ENCODE measurements at regions of chr20 and their contacts with region 1.

Region 1: DNA sequence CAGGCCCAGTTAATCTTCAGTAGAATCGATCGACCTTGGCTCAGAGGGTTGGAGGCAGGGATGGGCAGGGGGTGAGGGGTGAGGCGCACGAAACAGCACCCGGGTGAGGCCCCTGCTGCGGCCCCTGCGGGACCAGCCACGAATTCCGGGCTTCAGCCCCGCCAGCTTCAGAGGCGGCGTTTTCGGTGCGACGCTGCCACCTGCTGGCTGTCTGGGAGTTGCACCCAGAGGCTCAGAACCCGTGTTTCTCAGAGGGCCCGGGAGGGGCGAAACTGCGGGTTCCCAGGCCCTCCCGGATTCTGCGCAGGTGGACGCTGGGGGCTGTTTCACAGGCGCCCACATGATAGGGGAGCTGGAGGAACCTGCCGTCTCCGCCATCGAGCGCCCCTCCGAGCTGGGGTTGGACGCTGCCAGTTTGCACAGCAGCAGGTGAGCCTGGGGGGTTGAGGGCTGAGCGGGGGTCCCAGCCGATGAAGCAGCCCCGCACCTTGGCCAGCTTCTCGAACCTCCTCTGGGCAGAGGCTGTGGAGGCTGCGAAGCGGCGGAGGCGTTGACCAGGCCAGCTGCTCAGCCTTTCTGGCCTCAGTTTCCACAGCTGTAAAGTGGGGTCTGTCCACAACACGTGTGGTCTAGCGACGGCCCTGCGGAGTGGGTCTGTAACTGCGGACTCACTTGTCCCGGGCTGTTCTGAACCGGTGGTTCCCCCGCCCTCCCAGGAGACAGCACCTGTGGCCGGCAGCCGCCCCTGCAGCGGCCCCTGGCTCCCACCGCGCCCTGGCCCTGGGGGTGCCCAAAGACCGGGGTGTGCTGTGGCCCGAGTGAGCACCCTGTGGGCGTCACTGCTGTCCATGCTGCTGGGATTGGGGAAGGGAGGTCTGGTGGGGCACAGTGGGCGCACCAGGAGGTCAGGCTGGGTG is 2.5 kb upstream of the BHLHE23 start:
- DNase-seq: peak; percentile 90
- ATAC-seq: peak; percentile 82
- H3K4me3 Mint-ChIP-seq: no peak overlapping the region
- H3K27ac Mint-ChIP-seq: no peak overlapping the region
- H3K4me1 Mint-ChIP-seq: peaks cover 21% of the 10 kb centered on the region
- H3K27me3 Mint-ChIP-seq: peaks cover 42% of the 10 kb centered on the region

Region 2: GRCh38 chr20:62822788-62823651 is 186.3 kb before region 1 on chr20:
- CTCF ChIA-PET with region 1: no interaction called
- POLR2A ChIA-PET with region 1: no interaction called
- intact Hi-C with region 1: loop called (anchors 2 to 5 kb)
- DNase-seq: peak; percentile 82
- ATAC-seq: peak; percentile 85
- H3K4me3 Mint-ChIP-seq: no peak overlapping the region
- H3K27ac Mint-ChIP-seq: no peak overlapping the region
- H3K4me1 Mint-ChIP-seq: no peaks in the 10 kb centered on the region
- H3K27me3 Mint-ChIP-seq: peaks cover 3% of the 10 kb centered on the region

Region 3: DNA sequence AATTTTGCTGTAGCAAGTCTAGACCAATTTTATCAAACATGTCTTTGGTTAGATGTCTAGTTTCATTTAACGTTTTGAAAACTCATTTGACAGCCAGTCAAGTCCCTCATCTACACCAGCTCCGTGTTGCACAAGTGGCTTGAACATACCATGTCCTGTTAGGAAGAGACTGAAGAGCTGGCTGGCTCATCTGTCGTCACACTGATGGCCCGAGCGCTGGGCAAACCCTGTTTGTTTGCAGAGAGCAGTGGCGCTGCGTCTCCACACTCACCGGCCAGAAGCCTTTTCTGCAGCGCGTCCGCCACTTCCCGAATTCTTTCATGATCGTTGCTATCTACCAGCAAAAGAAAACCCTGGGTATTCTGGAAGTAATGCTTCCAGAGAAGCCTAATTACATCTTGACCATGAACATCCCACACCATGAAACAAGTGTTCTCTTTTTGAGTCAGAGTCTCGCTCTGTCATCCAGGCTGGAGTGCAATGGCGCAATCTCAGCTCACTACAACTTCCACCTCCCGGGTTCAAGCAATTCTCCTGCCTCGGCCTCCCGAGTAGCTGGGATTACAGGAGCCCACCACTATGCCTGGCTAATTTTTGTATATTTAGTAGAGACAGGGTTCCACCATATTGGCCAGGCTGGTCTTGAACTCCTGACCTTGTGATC is 137.0 kb before region 1 on chr20:
- CTCF ChIA-PET with region 1: interaction called, 4 read pairs
- POLR2A ChIA-PET with region 1: no interaction called
- intact Hi-C with region 1: loop called in 1 of 2 experiments (anchors 2 kb)
- DNase-seq: no peak
- ATAC-seq: no peak
- H3K4me3 Mint-ChIP-seq: no peak overlapping the region
- H3K27ac Mint-ChIP-seq: no peak overlapping the region
- H3K4me1 Mint-ChIP-seq: peaks cover 21% of the 10 kb centered on the region
- H3K27me3 Mint-ChIP-seq: peaks cover 2% of the 10 kb centered on the region

Region 4: DNA sequence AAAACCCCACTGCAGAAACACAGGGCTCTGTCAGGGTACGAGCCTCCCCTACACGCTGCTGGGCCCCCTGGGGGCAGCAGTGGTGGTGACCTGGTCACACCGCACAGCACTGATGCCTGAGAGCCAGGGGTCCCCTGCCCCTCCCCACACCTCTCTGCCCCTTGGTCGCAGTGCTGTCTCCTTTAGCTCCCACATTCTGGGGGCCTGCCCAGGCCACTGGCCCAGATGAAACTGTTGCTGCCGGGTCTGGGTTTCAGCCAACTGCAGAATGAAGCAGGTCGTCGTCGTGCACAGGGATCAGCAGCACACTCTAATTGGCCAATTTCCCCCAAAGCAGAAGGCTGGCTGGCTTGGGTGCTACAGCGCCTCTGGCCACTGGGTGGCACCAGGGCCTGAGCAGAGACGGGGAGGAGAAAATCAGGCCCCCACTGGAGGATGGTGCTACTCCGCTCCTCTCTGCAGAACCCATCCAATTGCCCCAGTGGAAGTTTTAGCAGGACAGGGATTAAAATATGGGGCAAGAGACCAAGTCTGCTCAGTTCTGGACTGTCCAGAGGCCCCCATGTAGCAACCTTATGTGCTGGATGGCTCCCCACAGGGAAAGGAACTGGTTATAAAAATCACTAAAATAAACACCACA is 109.1 kb before region 1 on chr20:
- CTCF ChIA-PET with region 1: interaction called, 7 read pairs
- POLR2A ChIA-PET with region 1: no interaction called
- intact Hi-C with region 1: loop called (anchors 1 to 5 kb)
- DNase-seq: peak; percentile 86
- ATAC-seq: peak; percentile 93
- H3K4me3 Mint-ChIP-seq: no peak overlapping the region
- H3K27ac Mint-ChIP-seq: peak overlapping the region; percentile 56
- H3K4me1 Mint-ChIP-seq: peaks cover 38% of the 10 kb centered on the region
- H3K27me3 Mint-ChIP-seq: no peaks in the 10 kb centered on the region

Region 5: GRCh38 chr20:62972270-62973032 is 36.9 kb before region 1 on chr20:
- CTCF ChIA-PET with region 1: interaction called, 27 read pairs
- POLR2A ChIA-PET with region 1: no interaction called
- intact Hi-C with region 1: loop called (anchors 1 kb)
- DNase-seq: peak; percentile 93
- ATAC-seq: peak; percentile 99
- H3K4me3 Mint-ChIP-seq: peak overlapping the region; percentile 4
- H3K27ac Mint-ChIP-seq: no peak overlapping the region
- H3K4me1 Mint-ChIP-seq: peaks cover 19% of the 10 kb centered on the region
- H3K27me3 Mint-ChIP-seq: peaks cover 37% of the 10 kb centered on the region

Region 6: DNA sequence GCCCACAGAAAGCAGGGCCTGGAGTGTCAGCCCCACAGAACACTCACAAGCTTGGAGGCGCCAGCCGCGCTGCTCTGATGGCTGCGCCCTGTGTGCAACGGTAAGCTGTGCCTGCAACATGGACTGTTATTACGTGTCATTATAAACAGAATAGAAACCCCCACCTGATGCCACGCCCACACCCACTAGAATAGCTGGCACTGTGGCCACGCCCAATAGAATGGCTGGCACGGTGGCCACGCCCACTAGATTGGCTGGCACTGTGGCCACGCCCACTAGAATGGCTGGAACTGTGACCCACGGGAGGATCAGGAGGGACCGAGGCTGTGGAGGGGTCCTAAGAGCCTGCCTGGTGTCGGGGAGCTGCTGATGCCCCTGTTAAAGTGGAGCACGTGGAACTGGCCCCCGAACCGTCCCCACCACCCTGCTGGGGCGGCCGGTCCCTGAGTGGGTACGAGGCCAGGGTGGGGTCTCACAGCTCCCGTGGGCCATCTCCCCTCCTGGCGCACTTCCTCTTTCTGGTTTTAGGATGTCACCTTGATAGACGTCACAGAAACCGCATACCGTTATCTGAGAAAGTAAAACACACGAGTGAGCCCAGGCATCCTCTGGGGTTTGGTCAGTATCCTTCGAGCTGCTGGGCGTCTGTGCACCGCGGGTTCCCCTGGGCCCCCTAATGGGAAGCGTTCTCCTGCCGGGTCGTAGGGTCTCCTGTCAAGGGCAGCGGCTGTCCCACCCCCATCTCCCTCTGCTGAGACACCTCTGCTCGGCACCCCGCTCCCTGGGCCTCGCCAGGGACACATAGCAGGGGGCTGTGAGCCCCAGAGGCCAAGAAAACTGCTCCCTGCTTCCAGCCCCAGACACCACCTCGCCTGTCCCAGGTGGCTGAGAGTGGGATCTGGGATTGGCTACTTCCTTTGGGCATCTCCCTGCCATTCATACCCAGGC is 31.4 kb before region 1 on chr20:
- CTCF ChIA-PET with region 1: interaction called, 27 read pairs
- POLR2A ChIA-PET with region 1: no interaction called
- intact Hi-C with region 1: no loop called
- DNase-seq: peak; percentile 90
- ATAC-seq: peak; percentile 87
- H3K4me3 Mint-ChIP-seq: peak overlapping the region; percentile 19
- H3K27ac Mint-ChIP-seq: no peak overlapping the region
- H3K4me1 Mint-ChIP-seq: peaks cover 27% of the 10 kb centered on the region
- H3K27me3 Mint-ChIP-seq: peaks cover 50% of the 10 kb centered on the region